B cell (primary cell): ENCODE measurements at regions of chr3 and their contacts with region 1.

Region 1: DNA sequence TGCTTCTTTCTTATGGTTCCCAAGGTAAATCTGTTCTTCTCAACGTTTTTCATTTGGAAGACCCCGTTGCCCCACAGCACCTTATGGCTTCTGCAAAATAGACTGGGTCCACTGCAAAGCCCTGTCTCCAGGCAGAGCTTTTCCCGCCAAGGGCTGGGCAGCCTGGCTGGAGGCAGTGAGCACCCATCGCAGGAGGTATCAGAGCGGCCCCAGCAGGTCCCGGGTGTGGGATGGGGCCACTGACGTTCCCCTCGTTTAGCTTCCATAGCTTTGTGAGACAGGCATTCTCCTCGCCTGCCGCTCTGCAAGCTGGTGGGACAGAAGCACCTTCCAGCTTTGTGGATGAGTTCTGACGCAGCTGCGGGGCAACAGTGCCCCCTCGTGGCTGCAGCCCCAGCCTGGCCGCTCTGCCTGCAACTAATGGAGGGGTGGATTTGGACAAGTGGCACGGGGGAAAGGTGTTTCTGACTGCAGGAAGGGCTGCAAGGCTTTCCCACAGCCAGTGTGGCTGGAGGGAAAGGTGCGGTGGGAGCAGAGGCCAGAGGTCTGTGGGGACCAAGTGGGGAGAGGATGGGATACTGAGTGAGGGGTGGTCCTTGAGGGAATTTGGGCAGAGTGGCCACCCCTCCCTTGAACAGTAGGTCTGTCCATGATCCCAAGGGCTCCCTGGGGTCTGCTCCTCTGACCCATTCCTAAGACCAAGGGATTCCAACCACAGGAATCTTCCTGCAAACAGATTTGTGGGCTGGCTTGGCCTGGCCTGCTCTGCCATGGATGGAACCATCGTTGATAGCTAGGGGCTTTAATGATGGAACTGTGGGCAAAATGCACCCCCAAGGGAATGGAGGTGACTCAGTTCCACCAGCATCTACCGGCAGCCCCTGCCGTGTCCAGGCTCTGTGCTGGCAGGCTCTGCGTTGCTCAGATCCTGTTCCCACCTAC is 99.4 kb downstream of the FBLN2 start:
- DNase-seq: peak; percentile 82
- ATAC-seq: peak; percentile 59
- H3K4me3 ChIP-seq: no peak overlapping the region
- H3K4me3 Mint-ChIP-seq: no peak overlapping the region
- H3K27ac ChIP-seq: no peak overlapping the region
- H3K27ac Mint-ChIP-seq: peak overlapping the region; percentile 35
- H3K4me1 ChIP-seq: peaks cover 17 to 20% of the 10 kb centered on the region in 2 donors
- H3K4me1 Mint-ChIP-seq: peaks cover 20% of the 10 kb centered on the region
- H3K27me3 ChIP-seq: peaks cover 0 to 43% (median 10%) of the 10 kb centered on the region in 4 experiments
- H3K27me3 Mint-ChIP-seq: peaks cover 57% of the 10 kb centered on the region
- CTCF ChIP-seq: peak; percentile 97

Region 2: DNA sequence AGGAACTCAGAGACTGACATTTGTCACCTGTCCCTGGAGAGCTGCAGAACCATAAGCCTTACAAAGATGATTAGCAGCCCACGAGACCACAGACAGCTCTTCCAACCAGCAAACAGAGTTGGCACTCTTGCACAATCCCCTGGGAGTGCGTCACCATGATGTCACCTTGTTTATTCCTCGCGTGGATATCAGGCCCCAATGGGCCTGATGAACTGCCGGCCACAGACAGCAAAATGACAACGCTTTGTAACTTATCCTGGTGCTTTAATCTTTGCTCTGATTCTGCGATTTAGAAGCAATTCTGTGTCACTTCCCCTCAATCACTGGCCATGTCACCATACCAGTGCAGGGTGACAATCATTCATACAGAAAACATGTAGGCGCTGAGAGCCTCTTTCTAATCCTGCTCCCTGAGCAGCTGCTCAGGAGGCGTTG is 1890.9 kb before region 1 on chr3:
- CTCF ChIA-PET with region 1: no interaction called
- POLR2A ChIA-PET with region 1: no interaction called
- intact Hi-C with region 1: loop called (anchors 10 kb)
- DNase-seq: no peak
- ATAC-seq: no peak
- H3K4me3 ChIP-seq: no peak overlapping the region
- H3K4me3 Mint-ChIP-seq: no peak overlapping the region
- H3K27ac ChIP-seq: no peak overlapping the region
- H3K27ac Mint-ChIP-seq: no peak overlapping the region
- H3K4me1 ChIP-seq: no peaks in the 10 kb centered on the region
- H3K4me1 Mint-ChIP-seq: no peaks in the 10 kb centered on the region
- H3K27me3 ChIP-seq: no peaks in the 10 kb centered on the region
- H3K27me3 Mint-ChIP-seq: no peaks in the 10 kb centered on the region
- CTCF ChIP-seq: no peak

Region 3: GRCh38 chr3:13479581-13480339 is 168.6 kb before region 1 on chr3 and contains the start of gene HDAC11:
- CTCF ChIA-PET with region 1: interaction called, 14 read pairs
- POLR2A ChIA-PET with region 1: no interaction called
- intact Hi-C with region 1: no loop called
- DNase-seq: peak; percentile 97
- ATAC-seq: peak; percentile 97
- H3K4me3 ChIP-seq: peak within 1 kb of the TSS; percentile 65 to 90 (median 80)
- H3K4me3 Mint-ChIP-seq: peak within 1 kb of the TSS; percentile 92
- H3K27ac ChIP-seq: peak within 1 kb of the TSS; percentile 61 to 86
- H3K27ac Mint-ChIP-seq: peak within 1 kb of the TSS; percentile 84
- H3K4me1 ChIP-seq: peaks cover 0 to 16% of the 10 kb centered on the region in 2 donors
- H3K4me1 Mint-ChIP-seq: peaks cover 7% of the 10 kb centered on the region
- H3K27me3 ChIP-seq: no peaks in the 10 kb centered on the region
- H3K27me3 Mint-ChIP-seq: peaks cover 3% of the 10 kb centered on the region
- CTCF ChIP-seq: no peak
- total RNA-seq, gene HDAC11: 5.5 and 6.1 TPM in 2 replicates

Region 4: GRCh38 chr3:13495921-13496723 is 152.2 kb before region 1 on chr3:
- CTCF ChIA-PET with region 1: interaction called, 286 read pairs
- POLR2A ChIA-PET with region 1: interaction called, 10 read pairs
- intact Hi-C with region 1: loop called (anchors 1 kb)
- DNase-seq: peak; percentile 75
- ATAC-seq: peak; percentile 86
- H3K4me3 ChIP-seq: no peak overlapping the region
- H3K4me3 Mint-ChIP-seq: no peak overlapping the region
- H3K27ac ChIP-seq: no peak overlapping the region
- H3K27ac Mint-ChIP-seq: no peak overlapping the region
- H3K4me1 ChIP-seq: no peaks in the 10 kb centered on the region
- H3K4me1 Mint-ChIP-seq: no peaks in the 10 kb centered on the region
- H3K27me3 ChIP-seq: no peaks in the 10 kb centered on the region
- H3K27me3 Mint-ChIP-seq: peaks cover 3% of the 10 kb centered on the region
- CTCF ChIP-seq: peak; percentile 88

Region 5: DNA sequence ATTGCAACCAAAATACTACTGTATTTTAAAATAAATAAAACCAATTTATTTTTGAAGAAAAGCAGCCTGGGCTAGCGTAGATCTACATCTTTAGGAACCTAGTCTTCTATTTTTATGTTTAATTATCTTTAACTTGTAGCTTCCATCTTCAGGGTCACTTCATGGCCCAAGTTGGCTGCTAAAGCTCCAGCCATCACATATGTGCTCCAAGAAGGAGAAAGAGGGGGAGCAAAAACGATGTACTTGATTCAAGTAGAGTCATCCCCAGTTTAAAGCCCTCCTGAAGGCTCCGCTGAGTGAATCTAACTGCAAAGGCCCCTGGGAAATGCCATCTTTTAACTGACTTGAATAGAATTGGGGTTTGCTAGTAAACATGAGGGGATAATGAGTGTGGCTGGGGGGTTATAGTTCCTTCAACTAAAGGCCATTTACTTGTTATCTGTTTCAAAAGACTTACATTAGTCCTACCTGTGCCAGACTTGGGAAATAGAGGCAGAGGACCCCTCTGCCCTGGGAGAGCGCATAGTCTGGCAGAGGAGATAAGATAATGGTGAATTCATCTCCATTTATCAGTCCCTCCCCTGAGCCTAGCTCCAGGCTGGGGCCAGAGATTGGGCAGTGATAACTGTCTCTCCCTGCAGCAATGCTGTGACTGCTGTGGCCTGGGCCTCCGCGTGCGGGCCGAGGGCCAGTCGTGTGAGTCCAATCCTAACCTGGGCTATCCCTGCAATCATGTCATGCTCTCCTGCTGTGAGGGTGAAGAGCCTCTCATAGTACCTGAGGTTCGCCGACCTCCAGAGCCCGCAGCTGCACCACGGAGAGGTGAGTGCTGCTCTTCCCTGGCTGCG is 34.8 kb before region 1 on chr3:
- CTCF ChIA-PET with region 1: no interaction called
- POLR2A ChIA-PET with region 1: no interaction called
- intact Hi-C with region 1: no loop called
- DNase-seq: no peak
- ATAC-seq: no peak
- H3K4me3 ChIP-seq: no peak overlapping the region
- H3K4me3 Mint-ChIP-seq: no peak overlapping the region
- H3K27ac ChIP-seq: no peak overlapping the region
- H3K27ac Mint-ChIP-seq: no peak overlapping the region
- H3K4me1 ChIP-seq: no peaks in the 10 kb centered on the region
- H3K4me1 Mint-ChIP-seq: no peaks in the 10 kb centered on the region
- H3K27me3 ChIP-seq: no peaks in the 10 kb centered on the region
- H3K27me3 Mint-ChIP-seq: peaks cover 11% of the 10 kb centered on the region
- CTCF ChIP-seq: no peak

Region 6: DNA sequence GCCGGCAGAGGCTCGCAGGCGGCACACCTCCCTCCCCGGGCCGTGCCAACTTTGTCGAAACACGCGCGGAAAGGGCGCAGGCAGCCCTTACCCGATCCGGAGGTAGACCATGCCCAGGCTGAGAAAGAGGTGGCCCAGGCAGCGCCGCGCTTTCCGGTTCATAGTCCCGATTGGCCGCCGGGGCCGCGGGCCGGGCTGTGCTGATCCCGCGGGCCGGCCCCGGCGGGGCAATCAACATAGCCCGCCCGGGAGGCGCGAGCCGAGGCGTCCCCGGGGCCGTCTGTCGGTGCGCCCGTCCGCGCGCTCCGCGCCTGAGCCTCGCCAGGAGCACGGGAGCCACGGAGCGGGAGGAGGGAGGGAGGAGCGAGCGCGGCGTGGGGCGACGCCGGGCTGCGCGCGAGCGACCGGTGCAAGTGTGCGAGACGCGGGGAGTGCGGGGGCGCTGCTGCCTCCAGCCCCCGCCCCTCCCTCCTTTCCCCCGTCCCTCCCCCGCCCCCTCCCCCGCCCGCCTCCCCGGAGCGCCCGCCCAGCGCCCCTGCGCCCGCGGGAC is 231.4 kb after region 1 on chr3 and contains the start of gene WNT7A:
- CTCF ChIA-PET with region 1: no interaction called
- POLR2A ChIA-PET with region 1: no interaction called
- intact Hi-C with region 1: loop called (anchors 10 kb)
- DNase-seq: peak; percentile 32
- ATAC-seq: no peak
- H3K4me3 ChIP-seq: peak within 1 kb of the TSS in 3 of 5 experiments; percentile 23 to 33 (median 33)
- H3K4me3 Mint-ChIP-seq: peak within 1 kb of the TSS; percentile 75
- H3K27ac ChIP-seq: no peak within 1 kb of the TSS
- H3K27ac Mint-ChIP-seq: no peak within 1 kb of the TSS
- H3K4me1 ChIP-seq: peaks cover 23 to 27% of the 10 kb centered on the region in 2 donors
- H3K4me1 Mint-ChIP-seq: peaks cover 11% of the 10 kb centered on the region
- H3K27me3 ChIP-seq: peaks cover 0 to 67% (median 32%) of the 10 kb centered on the region in 4 experiments
- H3K27me3 Mint-ChIP-seq: peaks cover 65% of the 10 kb centered on the region
- CTCF ChIP-seq: no peak
- total RNA-seq, gene WNT7A: not detected in 2 replicates